ENCODE measurements at regions of chr12 and their contacts with region 1.

Region 1: GRCh38 chr12:34223640-34224039 is 201.3 kb downstream of the ALG10 start:
- DNase-seq: no peak
- ATAC-seq: no peak
- H3K4me3 ChIP-seq: no peak overlapping the region
- H3K27ac ChIP-seq: no peak overlapping the region
- H3K4me1 ChIP-seq: peaks cover under 1% of the 10 kb centered on the region
- H3K27me3 ChIP-seq: no peaks in the 10 kb centered on the region
- CTCF ChIP-seq: no peak

Region 2: GRCh38 chr12:34126239-34126641 is 97.4 kb before region 1 on chr12:
- intact Hi-C with region 1: loop called (anchors 10 kb)
- DNase-seq: no peak
- ATAC-seq: peak; percentile 35 to 52
- H3K4me3 ChIP-seq: peak overlapping the region; percentile 31
- H3K27ac ChIP-seq: peak overlapping the region; percentile 15
- H3K4me1 ChIP-seq: no peaks in the 10 kb centered on the region
- H3K27me3 ChIP-seq: no peaks in the 10 kb centered on the region
- CTCF ChIP-seq: no peak

Measured in lower lobe of right lung (tissue), 2 donors.